ENCODE measurements at regions of chr18 and their contacts with region 1.

Region 1: DNA sequence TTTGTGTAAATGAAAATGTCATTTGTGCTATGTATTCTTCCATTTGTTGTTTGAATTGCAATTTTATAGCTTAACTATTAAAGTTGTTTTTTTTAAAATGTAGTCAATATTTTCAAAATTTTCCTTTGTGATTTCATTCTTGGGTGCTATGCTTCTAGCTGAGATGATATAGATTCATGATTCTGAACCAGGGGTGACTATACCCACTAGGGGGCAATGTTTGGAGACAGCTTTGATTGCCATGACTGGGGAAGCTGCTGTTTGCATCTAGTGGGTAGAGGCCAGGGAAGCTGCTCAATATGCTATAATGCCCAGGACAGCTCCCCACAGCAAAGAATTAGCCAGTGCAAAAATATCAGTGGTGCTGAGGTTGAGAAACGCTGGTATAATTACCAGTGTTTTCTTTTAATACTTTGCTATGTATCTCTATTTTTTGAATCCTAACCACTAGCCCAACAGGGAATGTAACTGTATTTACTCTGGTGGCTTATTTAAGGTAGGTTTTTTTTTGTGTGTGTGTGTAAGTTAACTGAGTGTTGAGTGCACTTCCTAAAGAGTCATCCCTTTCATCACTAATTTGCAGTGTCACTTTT is 99.7 kb downstream of the MEP1B start:
- DNase-seq: peak; percentile 75
- H3K4me3 ChIP-seq: no peak overlapping the region
- H3K27ac ChIP-seq: no peak overlapping the region
- H3K4me1 ChIP-seq: no peaks in the 10 kb centered on the region
- H3K27me3 ChIP-seq: no peaks in the 10 kb centered on the region

Region 2: DNA sequence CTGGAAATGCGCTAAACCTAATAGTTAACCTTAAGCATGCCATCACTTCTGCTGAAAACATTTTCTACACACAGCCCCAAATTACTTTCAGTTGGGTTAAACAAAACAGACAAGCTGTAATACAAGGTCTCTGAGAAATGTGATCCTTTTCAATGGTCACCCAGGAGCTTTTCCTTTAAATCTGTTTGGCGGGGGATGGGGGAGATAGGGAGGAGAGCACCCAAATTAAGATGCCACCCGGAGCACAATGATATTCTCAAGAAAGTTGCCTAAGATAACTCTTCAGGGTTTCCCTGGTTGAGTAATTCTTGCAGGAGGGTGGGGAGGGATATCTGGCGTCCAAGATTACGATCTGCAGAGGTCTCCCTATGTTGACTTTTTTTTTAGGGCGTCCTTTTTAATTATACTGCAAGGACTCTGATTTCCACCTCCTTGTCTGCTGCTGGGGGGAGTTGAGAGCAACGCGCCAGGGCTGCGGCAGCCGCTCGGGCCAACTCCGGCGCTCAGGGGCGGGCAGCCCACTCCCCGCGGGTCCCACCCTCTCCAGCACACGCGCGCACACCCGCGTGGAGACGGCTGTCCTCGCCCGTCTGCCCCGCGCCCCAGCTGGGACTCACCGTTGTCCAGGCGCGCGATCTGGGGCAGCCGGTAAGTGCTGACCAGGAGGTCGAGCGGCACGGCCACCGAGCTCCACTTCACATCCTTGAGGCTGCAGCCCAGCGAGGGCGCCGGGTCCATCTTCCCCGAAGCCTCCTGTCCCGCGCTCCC is 180.3 kb after region 1 on chr18:
- in situ Hi-C with region 1: loop called (anchors 10 kb)
- DNase-seq: peak; percentile 63
- H3K4me3 ChIP-seq: peak overlapping the region; percentile 80
- H3K27ac ChIP-seq: no peak overlapping the region
- H3K4me1 ChIP-seq: no peaks in the 10 kb centered on the region
- H3K27me3 ChIP-seq: peaks cover 3% of the 10 kb centered on the region; the same call in 1 of the 2 replicates

Region 3: GRCh38 chr18:32956591-32957315 is 667.2 kb after region 1 on chr18:
- in situ Hi-C with region 1: no loop called
- DNase-seq: peak; percentile 50
- H3K4me3 ChIP-seq: no peak overlapping the region
- H3K27ac ChIP-seq: no peak overlapping the region
- H3K4me1 ChIP-seq: 0 out of 2 replicates have a peak, but pooled peaks cover 7% of the 10 kb centered on the region
- H3K27me3 ChIP-seq: no peaks in the 10 kb centered on the region